HCT116 (cell line): ENCODE measurements at regions of chr1 and their contacts with region 1.

Region 1: DNA sequence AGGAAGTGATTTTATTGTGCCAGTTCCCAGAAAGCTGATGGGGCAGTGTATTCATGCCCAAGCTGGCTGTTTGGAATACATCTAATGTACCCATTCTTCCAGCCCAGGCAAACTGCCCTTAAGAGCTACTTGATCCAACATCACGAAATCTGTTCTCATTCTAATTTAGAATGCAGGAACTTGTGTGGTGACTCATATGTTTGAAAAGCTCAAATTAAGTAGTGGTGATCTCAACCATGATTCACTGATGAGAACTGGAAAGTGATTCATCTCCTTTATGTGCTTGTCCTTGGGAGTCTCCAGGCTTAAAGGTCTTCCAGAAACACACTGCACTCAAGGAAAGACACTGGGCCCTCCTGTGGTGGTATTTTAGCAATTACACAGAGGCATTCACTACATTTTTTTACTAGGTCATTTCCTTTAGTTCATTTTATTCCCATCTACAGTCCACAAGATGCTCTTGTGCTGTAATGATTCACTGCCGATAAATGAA is 65.4 kb downstream of the RPE65 start:
- DNase-seq: peak; percentile 99
- ATAC-seq: peak; percentile 80
- H3K4me3 ChIP-seq: peak overlapping the region; percentile 12 to 69
- H3K27ac ChIP-seq: peak overlapping the region; percentile 91
- H3K4me1 ChIP-seq: peaks cover 46 to 66% of the 10 kb centered on the region in 2 experiments
- H3K27me3 ChIP-seq: no peaks in the 10 kb centered on the region
- CTCF ChIP-seq: peak; percentile 35 to 48 (median 47); a peak in 5 of 6 replicates
- POLR2A ChIP-seq: no peak
- RAD21 ChIP-seq: peak; percentile 61

Region 2: DNA sequence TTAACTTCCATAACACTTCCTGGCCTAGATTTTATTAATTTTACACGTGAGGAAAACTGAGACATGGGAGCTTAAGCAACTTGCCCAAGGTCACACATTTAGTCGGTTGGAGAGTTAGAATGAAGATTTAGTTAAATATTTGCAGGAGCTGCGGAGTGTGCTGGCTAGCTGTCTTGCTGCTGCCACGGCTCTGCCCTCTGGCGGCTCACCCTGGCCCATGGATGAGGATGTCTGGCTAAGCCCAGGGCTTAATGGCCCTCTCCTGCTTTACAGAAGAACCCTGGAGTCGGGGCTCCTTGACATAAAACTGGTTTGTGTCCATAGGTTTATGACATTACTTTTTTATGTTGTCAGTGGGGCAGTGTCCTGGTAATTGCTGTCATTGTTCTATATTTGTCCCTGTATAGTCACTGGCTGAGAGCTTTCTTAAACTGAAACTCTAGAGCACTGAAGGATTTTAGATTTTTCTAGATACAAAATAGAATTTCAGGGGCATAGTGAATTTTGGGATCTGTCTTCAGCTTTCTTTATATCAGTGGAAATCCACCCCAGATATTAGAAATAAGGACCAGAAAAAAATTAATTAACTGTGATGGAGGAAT is 63.2 kb before region 1 on chr1:
- CTCF ChIA-PET with region 1: no interaction called
- POLR2A ChIA-PET with region 1: interaction called, 5 read pairs
- RAD21 ChIA-PET with region 1: no interaction called
- intact Hi-C with region 1: loop called (anchors 2 kb)
- DNase-seq: no peak
- ATAC-seq: peak; percentile 69
- H3K4me3 ChIP-seq: no peak overlapping the region
- H3K27ac ChIP-seq: no peak overlapping the region
- H3K4me1 ChIP-seq: peaks cover 40 to 43% of the 10 kb centered on the region in 2 experiments
- H3K27me3 ChIP-seq: no peaks in the 10 kb centered on the region
- CTCF ChIP-seq: peak; percentile 72 to 91 (median 78)
- POLR2A ChIP-seq: no peak
- RAD21 ChIP-seq: peak; percentile 85

Region 3: GRCh38 chr1:68346188-68346808 is 38.1 kb before region 1 on chr1:
- CTCF ChIA-PET with region 1: interaction called, 13 read pairs
- POLR2A ChIA-PET with region 1: interaction called, 6 read pairs
- RAD21 ChIA-PET with region 1: interaction called in 1 of 2 experiments, 3 read pairs
- intact Hi-C with region 1: no loop called
- DNase-seq: peak; percentile 45
- ATAC-seq: peak; percentile 42
- H3K4me3 ChIP-seq: no peak overlapping the region
- H3K27ac ChIP-seq: no peak overlapping the region
- H3K4me1 ChIP-seq: peaks cover 0 to 31% of the 10 kb centered on the region in 2 experiments; a peak in 3 of 4 replicates
- H3K27me3 ChIP-seq: no peaks in the 10 kb centered on the region
- CTCF ChIP-seq: peak; percentile 46 to 75 (median 57); a peak in 5 of 6 replicates
- POLR2A ChIP-seq: no peak
- RAD21 ChIP-seq: peak; percentile 57